Natural killer cell (primary cell): ENCODE measurements at regions of chr17 and their contacts with region 1.

Region 1: GRCh38 chr17:2054512-2055291 is at the start of gene HIC1:
- DNase-seq: peak; percentile 84 to 90
- ATAC-seq: peak; percentile 39 to 68 (median 51)
- H3K4me3 ChIP-seq: peak within 1 kb of the TSS; percentile 31
- H3K4me3 Mint-ChIP-seq: peak within 1 kb of the TSS; percentile 86
- H3K27ac ChIP-seq: peak within 1 kb of the TSS; percentile 48
- H3K27ac Mint-ChIP-seq: peak within 1 kb of the TSS; percentile 54 to 84
- H3K4me1 ChIP-seq: peaks cover 65% of the 10 kb centered on the region
- H3K4me1 Mint-ChIP-seq: peaks cover 15 to 30% of the 10 kb centered on the region in 2 donors
- H3K27me3 ChIP-seq: peaks cover 5% of the 10 kb centered on the region
- H3K27me3 Mint-ChIP-seq: no peaks in the 10 kb centered on the region
- CTCF ChIP-seq: peak; percentile 94
- total RNA-seq, gene HIC1: 19.2 to 26.4 (median 20.7) TPM

Region 2: DNA sequence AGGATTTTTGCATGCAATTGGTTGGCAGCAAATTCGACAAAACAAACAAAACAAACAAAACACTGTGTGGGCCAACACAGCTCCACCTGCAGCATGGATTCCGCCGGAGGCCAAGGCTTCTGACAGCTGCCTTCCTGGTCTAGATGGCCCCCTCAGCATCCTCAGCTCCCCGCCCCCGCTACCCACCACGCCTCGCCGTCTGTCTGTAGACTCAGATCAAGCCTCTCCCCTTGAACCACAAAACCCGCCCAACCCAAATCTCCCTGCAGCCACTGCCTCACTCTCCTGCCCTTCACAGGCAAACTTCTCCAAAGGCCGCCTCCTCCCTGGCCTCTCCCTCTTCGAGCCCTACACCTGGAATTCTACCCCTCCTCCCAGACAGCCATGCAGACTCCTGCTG is 87.5 kb before region 1 on chr17:
- intact Hi-C with region 1: no loop called
- DNase-seq: peak in 1 of 2 donors; percentile 13
- ATAC-seq: no peak
- H3K4me3 ChIP-seq: no peak overlapping the region
- H3K4me3 Mint-ChIP-seq: no peak overlapping the region
- H3K27ac ChIP-seq: no peak overlapping the region
- H3K27ac Mint-ChIP-seq: peak overlapping the region in 1 of 2 donors; percentile 5
- H3K4me1 ChIP-seq: no peaks in the 10 kb centered on the region
- H3K4me1 Mint-ChIP-seq: peaks cover 7 to 10% of the 10 kb centered on the region in 2 donors
- H3K27me3 ChIP-seq: no peaks in the 10 kb centered on the region
- H3K27me3 Mint-ChIP-seq: peaks cover 23 to 30% of the 10 kb centered on the region in 2 donors
- CTCF ChIP-seq: no peak

Region 3: DNA sequence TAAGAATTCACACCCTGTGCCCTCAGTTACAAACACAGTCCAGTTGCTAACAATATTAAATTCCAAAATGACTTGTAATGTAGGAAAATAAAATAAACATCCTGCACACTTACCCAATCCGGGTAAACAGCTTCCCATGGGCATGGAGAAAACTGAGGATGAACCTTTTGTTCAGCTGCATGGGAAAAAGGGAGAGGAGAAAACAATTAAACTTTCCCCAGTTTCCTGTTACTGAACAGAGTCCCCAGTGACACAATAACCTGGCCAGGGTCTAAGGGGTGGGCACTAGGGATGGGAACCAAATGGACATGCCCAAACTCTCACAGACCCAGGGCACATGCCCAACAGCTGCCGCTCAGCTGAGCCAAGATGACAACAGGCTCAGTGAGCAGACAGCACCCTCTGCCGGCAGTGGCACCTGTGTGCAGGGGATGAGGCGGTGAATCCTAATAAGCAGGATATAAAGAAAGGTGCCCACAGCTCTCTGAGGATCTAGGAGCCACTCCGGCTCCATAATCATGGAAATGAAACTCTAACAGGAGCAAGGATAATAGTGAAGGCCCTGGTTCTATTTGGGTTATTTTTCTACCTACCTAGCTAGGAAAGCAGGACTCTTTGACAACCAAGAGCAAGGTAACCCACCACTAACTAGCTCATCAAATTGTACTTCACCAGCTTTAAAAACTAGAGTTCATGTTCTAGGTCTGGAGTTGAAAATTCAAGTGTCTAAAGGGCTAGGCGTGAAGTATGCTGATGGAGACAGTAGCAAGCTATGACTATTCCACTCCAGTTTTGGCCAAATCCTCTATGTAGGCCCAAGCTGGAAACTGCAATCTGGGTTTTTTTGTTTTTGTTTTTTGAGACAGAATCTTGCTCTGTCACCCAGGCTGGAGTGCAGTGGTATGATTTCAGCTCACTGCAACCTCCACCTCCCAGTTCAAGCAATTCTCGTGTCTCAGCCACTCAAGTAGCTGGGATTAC is 190.1 kb after region 1 on chr17:
- intact Hi-C with region 1: loop called (anchors 1 kb)
- DNase-seq: peak; percentile 78 to 92
- ATAC-seq: peak; percentile 96 to 100 (median 100)
- H3K4me3 ChIP-seq: no peak overlapping the region
- H3K4me3 Mint-ChIP-seq: no peak overlapping the region
- H3K27ac ChIP-seq: no peak overlapping the region
- H3K27ac Mint-ChIP-seq: peak overlapping the region; percentile 11 to 73
- H3K4me1 ChIP-seq: peaks cover 8% of the 10 kb centered on the region
- H3K4me1 Mint-ChIP-seq: peaks cover 16 to 27% of the 10 kb centered on the region in 2 donors
- H3K27me3 ChIP-seq: no peaks in the 10 kb centered on the region
- H3K27me3 Mint-ChIP-seq: no peaks in the 10 kb centered on the region
- CTCF ChIP-seq: peak; percentile 97

Region 4: GRCh38 chr17:2282297-2282873 is 227.7 kb after region 1 on chr17:
- intact Hi-C with region 1: loop called (anchors 1 kb)
- DNase-seq: peak in 1 of 2 donors; percentile 82
- ATAC-seq: peak in 2 of 3 donors; percentile 66 to 89
- H3K4me3 ChIP-seq: no peak overlapping the region
- H3K4me3 Mint-ChIP-seq: no peak overlapping the region
- H3K27ac ChIP-seq: no peak overlapping the region
- H3K27ac Mint-ChIP-seq: peak overlapping the region; percentile 23 to 68
- H3K4me1 ChIP-seq: no peaks in the 10 kb centered on the region
- H3K4me1 Mint-ChIP-seq: peaks cover 9 to 14% of the 10 kb centered on the region in 2 donors
- H3K27me3 ChIP-seq: no peaks in the 10 kb centered on the region
- H3K27me3 Mint-ChIP-seq: no peaks in the 10 kb centered on the region
- CTCF ChIP-seq: peak; percentile 66

Region 5: GRCh38 chr17:2348308-2348685 is 293.6 kb after region 1 on chr17:
- intact Hi-C with region 1: loop called (anchors 1 kb)
- DNase-seq: no peak
- ATAC-seq: no peak
- H3K4me3 ChIP-seq: no peak overlapping the region
- H3K4me3 Mint-ChIP-seq: no peak overlapping the region
- H3K27ac ChIP-seq: no peak overlapping the region
- H3K27ac Mint-ChIP-seq: no peak overlapping the region
- H3K4me1 ChIP-seq: peaks cover 6% of the 10 kb centered on the region
- H3K4me1 Mint-ChIP-seq: peaks cover 0 to 6% of the 10 kb centered on the region in 2 donors
- H3K27me3 ChIP-seq: no peaks in the 10 kb centered on the region
- H3K27me3 Mint-ChIP-seq: no peaks in the 10 kb centered on the region
- CTCF ChIP-seq: no peak